Heart left ventricle (tissue), 16 donors: ENCODE measurements at regions of chr11 and their contacts with region 1.

Region 1: DNA sequence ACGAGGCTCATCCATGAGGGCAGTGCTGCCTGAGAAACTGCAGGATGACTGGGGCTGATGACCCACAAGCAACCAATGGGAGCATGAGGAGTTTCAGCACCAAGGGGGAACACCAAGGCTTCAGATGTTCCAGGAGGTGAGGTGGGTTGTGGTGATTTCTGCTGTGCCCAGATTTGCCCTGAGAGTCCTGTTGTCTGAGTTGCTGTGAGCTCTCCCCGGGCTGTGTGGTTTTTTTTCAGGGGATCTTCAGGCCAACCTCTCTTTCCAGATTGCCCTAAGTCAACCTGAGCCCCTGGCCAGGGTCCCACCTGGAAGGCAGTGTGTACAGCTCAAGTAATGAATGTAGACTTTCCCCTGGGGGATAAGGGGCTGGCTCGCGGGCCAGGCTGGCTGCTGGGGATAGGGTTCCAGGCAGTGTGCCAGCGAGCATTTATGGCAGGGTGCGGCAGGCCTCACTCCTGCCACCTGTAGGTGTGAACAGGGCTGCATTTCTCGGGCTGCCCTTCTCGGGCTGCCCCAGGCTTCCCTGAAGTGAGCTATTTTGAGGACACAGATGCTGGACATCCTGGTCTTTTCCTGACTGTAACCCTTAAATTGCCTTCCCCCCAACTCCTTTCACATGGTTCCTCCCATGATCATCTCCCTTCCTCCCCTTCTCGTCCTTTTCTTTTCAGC is 9.8 kb downstream of the SLC22A6 start:
- DNase-seq: peak; percentile 43 to 77 (median 69)
- ATAC-seq: peak; percentile 73 to 94 (median 86)
- H3K4me3 ChIP-seq: no peak overlapping the region
- H3K27ac ChIP-seq: no peak overlapping the region
- H3K4me1 ChIP-seq: peaks cover 0 to 15% (median 5%) of the 10 kb centered on the region in 12 donors
- H3K27me3 ChIP-seq: peaks cover 0 to 4% (median 0%) of the 10 kb centered on the region in 9 donors
- CTCF ChIP-seq: peak; percentile 28 to 62 (median 48)
- POLR2A ChIP-seq: no peak

Region 2: DNA sequence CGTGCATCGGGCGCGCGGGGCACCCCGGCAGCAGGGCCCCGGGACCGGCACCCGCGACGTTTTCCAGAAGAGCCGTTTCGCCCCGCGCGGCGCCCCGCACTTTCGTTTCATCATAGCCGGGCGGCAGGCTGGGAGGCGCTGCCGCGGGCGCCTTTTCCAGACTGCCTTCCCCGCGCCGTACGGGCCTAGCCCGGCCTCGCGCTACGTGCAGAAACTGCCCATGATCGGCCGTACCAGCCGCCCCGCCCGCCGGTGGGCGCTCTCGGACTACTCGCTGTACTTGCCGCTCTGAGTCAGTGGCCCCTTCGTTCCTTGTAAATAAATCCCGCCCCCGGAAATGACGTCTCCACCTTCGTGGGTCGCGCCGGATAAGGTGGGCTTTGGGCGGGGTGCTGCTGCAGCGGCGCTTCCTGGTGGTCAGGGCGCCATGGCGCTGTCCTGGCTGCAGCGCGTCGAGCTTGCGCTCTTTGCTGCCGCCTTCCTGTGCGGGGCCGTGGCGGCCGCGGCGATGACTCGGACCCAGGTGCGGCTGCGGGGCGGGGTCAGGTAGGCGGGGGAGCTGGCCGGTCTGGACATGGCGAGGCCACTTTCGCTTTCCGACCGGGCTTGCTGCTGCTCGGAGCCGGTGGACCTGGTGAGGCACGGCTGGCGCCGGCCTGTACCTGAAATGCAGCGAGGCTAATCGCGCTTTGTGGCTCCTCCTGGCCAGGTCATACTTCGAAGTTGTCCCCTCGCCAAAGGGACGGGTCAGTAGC is 187.8 kb before region 1 on chr11 and contains the start of gene TMEM179B:
- intact Hi-C with region 1: no loop called
- DNase-seq: peak; percentile 96 to 99 (median 99)
- ATAC-seq: peak; percentile 81 to 90 (median 89)
- H3K4me3 ChIP-seq: peak within 1 kb of the TSS; percentile 83 to 100 (median 92)
- H3K27ac ChIP-seq: peak within 1 kb of the TSS; percentile 88 to 100 (median 98)
- H3K4me1 ChIP-seq: peaks cover 6 to 54% (median 43%) of the 10 kb centered on the region in 12 donors
- H3K27me3 ChIP-seq: no peaks in the 10 kb centered on the region
- CTCF ChIP-seq: peak in 6 of 12 donors; percentile 28 to 60 (median 46)
- POLR2A ChIP-seq: peak; percentile 81 to 97
- total RNA-seq, gene TMEM179B: 14.7 to 46.0 (median 19.4) TPM

Region 3: GRCh38 chr11:62831520-62832335 is 143.3 kb before region 1 on chr11 and contains the start of gene STX5:
- intact Hi-C with region 1: no loop called
- DNase-seq: peak; percentile 99 to 100 (median 100)
- ATAC-seq: peak; percentile 97 to 99 (median 98)
- H3K4me3 ChIP-seq: peak within 1 kb of the TSS; percentile 53 to 99 (median 93)
- H3K27ac ChIP-seq: peak within 1 kb of the TSS; percentile 87 to 98 (median 95)
- H3K4me1 ChIP-seq: peaks cover 10 to 42% (median 29%) of the 10 kb centered on the region in 12 donors
- H3K27me3 ChIP-seq: no peaks in the 10 kb centered on the region
- CTCF ChIP-seq: no peak
- POLR2A ChIP-seq: peak; percentile 12 to 87
- total RNA-seq, gene STX5: 16.2 to 26.8 (median 18.9) TPM

Region 4: DNA sequence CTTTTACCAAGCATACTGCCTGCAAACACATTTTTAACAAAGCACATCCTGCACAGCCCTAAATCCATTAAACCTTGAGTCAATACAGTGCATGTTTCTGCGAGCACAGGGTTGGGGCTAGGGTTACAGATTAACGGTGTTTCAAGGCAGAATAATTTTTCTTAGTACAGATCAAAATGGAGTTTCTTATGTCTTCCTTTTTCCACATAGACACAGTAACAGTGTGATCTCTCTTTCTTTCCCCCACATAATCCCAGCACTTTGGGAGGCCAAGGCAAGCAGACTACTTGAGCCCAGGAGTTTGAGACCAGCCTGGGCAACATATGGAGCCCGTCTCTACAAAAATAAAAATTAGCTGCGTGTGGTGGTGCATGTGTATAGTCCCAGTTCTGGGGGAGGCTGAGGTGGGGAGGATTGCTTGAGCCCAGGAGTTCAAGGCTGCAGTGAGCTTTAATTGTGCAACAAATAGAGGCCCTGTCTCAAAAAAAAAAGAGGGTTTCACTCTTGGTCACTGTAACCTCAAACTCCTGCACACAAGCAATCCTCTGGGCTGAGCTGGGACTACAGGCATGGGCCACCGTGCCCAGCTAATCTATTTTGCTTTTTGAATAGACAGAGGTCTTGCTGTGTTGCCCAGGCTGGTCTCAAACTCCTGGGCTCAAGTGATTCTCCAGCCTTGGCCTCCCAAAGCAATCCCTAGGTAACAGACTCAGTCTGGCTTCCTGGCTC is 114.0 kb before region 1 on chr11:
- intact Hi-C with region 1: no loop called
- DNase-seq: no peak
- ATAC-seq: no peak
- H3K4me3 ChIP-seq: no peak overlapping the region
- H3K27ac ChIP-seq: peak overlapping the region in 1 of 12 donors; percentile 3
- H3K4me1 ChIP-seq: peaks cover 0 to 29% (median 5%) of the 10 kb centered on the region in 12 donors
- H3K27me3 ChIP-seq: no peaks in the 10 kb centered on the region
- CTCF ChIP-seq: no peak
- POLR2A ChIP-seq: no peak

Region 5: GRCh38 chr11:62905927-62906531 is 69.0 kb before region 1 on chr11:
- intact Hi-C with region 1: loop called in 7 of 10 experiments (anchors 1 to 10 kb)
- DNase-seq: peak; percentile 66 to 85 (median 78)
- ATAC-seq: peak in 3 of 4 donors; percentile 78 to 82 (median 79)
- H3K4me3 ChIP-seq: no peak overlapping the region
- H3K27ac ChIP-seq: no peak overlapping the region
- H3K4me1 ChIP-seq: peaks cover 0 to 30% (median 12%) of the 10 kb centered on the region in 12 donors
- H3K27me3 ChIP-seq: peaks cover 0 to 3% (median 0%) of the 10 kb centered on the region in 9 donors
- CTCF ChIP-seq: peak in 11 of 12 donors; percentile 94 to 99 (median 97)
- POLR2A ChIP-seq: no peak

Region 6: GRCh38 chr11:62911137-62912130 is 63.6 kb before region 1 on chr11:
- intact Hi-C with region 1: loop called in 7 of 10 experiments (anchors 1 to 10 kb)
- DNase-seq: no peak
- ATAC-seq: no peak
- H3K4me3 ChIP-seq: no peak overlapping the region
- H3K27ac ChIP-seq: no peak overlapping the region
- H3K4me1 ChIP-seq: peaks cover 0 to 25% (median 12%) of the 10 kb centered on the region in 12 donors
- H3K27me3 ChIP-seq: peaks cover 0 to 3% (median 0%) of the 10 kb centered on the region in 9 donors
- CTCF ChIP-seq: no peak
- POLR2A ChIP-seq: no peak

Region 7: GRCh38 chr11:63132985-63133775 is 158.2 kb after region 1 on chr11:
- intact Hi-C with region 1: no loop called
- DNase-seq: no peak
- ATAC-seq: no peak
- H3K4me3 ChIP-seq: no peak overlapping the region
- H3K27ac ChIP-seq: no peak overlapping the region
- H3K4me1 ChIP-seq: no peaks in the 10 kb centered on the region
- H3K27me3 ChIP-seq: peaks cover 0 to 5% (median 0%) of the 10 kb centered on the region in 9 donors
- CTCF ChIP-seq: no peak
- POLR2A ChIP-seq: no peak